ENCODE measurements at regions of chr3 and their contacts with region 1.

Region 1: GRCh38 chr3:167684388-167684993 is 30.7 kb upstream of the WDR49 start:
- DNase-seq: peak; percentile 61
- H3K4me3 Mint-ChIP-seq: no peak overlapping the region
- H3K27ac Mint-ChIP-seq: no peak overlapping the region
- H3K4me1 Mint-ChIP-seq: peaks cover 13% of the 10 kb centered on the region
- H3K27me3 Mint-ChIP-seq: no peaks in the 10 kb centered on the region

Region 2: GRCh38 chr3:167380004-167380689 is 304.3 kb before region 1 on chr3 and contains the start of gene ZBBX:
- CTCF ChIA-PET with region 1: interaction called, 6 read pairs
- intact Hi-C with region 1: loop called (anchors 1 kb)
- DNase-seq: peak; percentile 92
- H3K4me3 Mint-ChIP-seq: peak within 1 kb of the TSS; percentile 77
- H3K27ac Mint-ChIP-seq: no peak within 1 kb of the TSS
- H3K4me1 Mint-ChIP-seq: peaks cover 4% of the 10 kb centered on the region
- H3K27me3 Mint-ChIP-seq: peaks cover 12% of the 10 kb centered on the region
- total RNA-seq, gene ZBBX: not detected

Region 3: DNA sequence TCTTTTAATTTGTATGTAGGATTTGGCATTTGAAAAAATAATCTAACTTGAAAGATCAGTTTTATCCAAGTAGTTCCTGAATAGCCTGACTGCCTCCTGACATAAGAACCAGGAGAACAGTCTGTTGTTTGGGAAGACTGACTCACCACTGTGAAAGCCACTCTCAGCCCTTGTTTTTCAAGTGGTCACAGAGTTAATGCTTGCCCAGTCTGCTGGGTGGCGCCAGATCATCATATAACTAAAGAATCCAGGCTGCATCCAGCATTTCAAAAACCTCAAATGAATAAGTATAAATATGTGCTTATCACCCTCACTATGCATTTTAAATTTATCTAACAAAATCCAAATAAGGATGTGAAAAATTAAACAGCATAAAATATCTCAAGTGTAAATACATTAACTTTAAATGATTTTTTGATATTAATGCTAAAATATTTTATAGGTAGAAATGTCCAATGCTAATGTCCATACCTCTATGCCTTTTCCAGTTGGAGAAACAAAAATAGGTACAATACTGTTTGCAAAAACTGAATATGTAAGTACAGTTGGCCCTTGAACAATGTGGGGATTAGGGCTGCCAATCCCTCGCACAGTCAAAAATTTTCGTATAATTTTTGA is 277.5 kb before region 1 on chr3:
- CTCF ChIA-PET with region 1: no interaction called
- intact Hi-C with region 1: loop called (anchors 1 kb)
- DNase-seq: peak; percentile 27
- H3K4me3 Mint-ChIP-seq: no peak overlapping the region
- H3K27ac Mint-ChIP-seq: no peak overlapping the region
- H3K4me1 Mint-ChIP-seq: no peaks in the 10 kb centered on the region
- H3K27me3 Mint-ChIP-seq: peaks cover 2% of the 10 kb centered on the region

Measured in activated naive CD4-positive, alpha-beta T cell treated with anti-CD3 and anti-CD28 coated beads for 36 hours (primary cell).